ENCODE measurements at regions of chr2 and their contacts with region 1.

Region 1: DNA sequence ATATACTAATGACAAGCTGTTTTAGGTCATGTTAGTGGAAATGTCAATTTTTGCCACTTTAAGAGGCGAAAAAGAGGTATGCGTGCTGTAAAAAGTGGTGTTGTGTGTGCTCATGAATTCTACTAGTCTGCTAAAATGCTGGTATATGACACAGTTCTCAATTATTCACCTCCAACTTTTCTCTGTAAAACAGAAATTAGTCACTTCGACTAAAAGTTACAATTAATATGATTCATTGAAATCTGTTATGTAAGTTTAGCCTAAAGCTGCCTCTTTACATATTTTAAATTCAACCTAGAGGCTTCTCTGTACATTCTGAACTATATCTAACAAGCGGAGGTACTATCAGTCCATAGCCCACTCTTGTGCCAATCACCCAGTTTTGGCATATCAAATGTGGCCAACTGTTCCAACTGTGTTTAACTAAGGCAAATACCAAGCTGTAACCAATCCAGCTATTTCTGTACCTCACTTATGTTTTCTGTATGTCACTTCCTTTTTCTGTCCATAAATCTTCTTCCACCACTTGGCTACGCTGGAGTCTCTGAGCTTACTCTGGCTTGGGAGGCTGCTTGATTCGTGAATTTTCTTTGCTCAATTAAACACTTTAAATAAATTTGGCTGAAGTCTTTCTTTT is 20.8 kb downstream of the BAZ2B start:
- DNase-seq: peak in 1 of 4 experiments; percentile 30
- ATAC-seq: peak; percentile 63
- H3K4me3 ChIP-seq: no peak overlapping the region
- H3K27ac ChIP-seq: peak overlapping the region; percentile 9; the same call in 1 of the 3 replicates
- H3K4me1 ChIP-seq: no peaks in the 10 kb centered on the region; a peak in 1 of 5 replicates
- H3K27me3 ChIP-seq: no peaks in the 10 kb centered on the region
- CTCF ChIP-seq: peak in 1 of 3 experiments; percentile 43; a peak in 2 of 6 replicates
- EP300 ChIP-seq: no peak
- POLR2A ChIP-seq: no peak
- RAD21 ChIP-seq: peak in 1 of 2 experiments; percentile 40; a peak in 3 of 4 replicates

Region 2: GRCh38 chr2:158936978-158937377 is 658.5 kb before region 1 on chr2:
- CTCF ChIA-PET with region 1: no interaction called
- POLR2A ChIA-PET with region 1: no interaction called
- in situ Hi-C with region 1: no loop called
- intact Hi-C with region 1: no loop called
- DNase-seq: no peak
- ATAC-seq: no peak
- H3K4me3 ChIP-seq: no peak overlapping the region
- H3K27ac ChIP-seq: no peak overlapping the region
- H3K4me1 ChIP-seq: no peaks in the 10 kb centered on the region
- H3K27me3 ChIP-seq: peaks cover 0 to 20% of the 10 kb centered on the region in 2 experiments; a peak in 4 of 5 replicates
- CTCF ChIP-seq: no peak
- EP300 ChIP-seq: no peak
- POLR2A ChIP-seq: no peak
- RAD21 ChIP-seq: no peak

Region 3: GRCh38 chr2:159573846-159574606 is 21.5 kb before region 1 on chr2:
- CTCF ChIA-PET with region 1: no interaction called
- POLR2A ChIA-PET with region 1: no interaction called
- in situ Hi-C with region 1: no loop called
- intact Hi-C with region 1: no loop called
- DNase-seq: no peak
- ATAC-seq: no peak
- H3K4me3 ChIP-seq: no peak overlapping the region
- H3K27ac ChIP-seq: no peak overlapping the region
- H3K4me1 ChIP-seq: no peaks in the 10 kb centered on the region
- H3K27me3 ChIP-seq: no peaks in the 10 kb centered on the region
- CTCF ChIP-seq: no peak
- EP300 ChIP-seq: no peak
- POLR2A ChIP-seq: no peak
- RAD21 ChIP-seq: no peak

Region 4: GRCh38 chr2:159609811-159610432 is 14.4 kb after region 1 on chr2:
- CTCF ChIA-PET with region 1: no interaction called
- POLR2A ChIA-PET with region 1: interaction called, 13 read pairs
- in situ Hi-C with region 1: no loop called
- intact Hi-C with region 1: no loop called
- DNase-seq: no peak
- ATAC-seq: no peak
- H3K4me3 ChIP-seq: no peak overlapping the region
- H3K27ac ChIP-seq: no peak overlapping the region
- H3K4me1 ChIP-seq: peaks cover 0 to 14% of the 10 kb centered on the region in 2 experiments; a peak in 3 of 5 replicates
- H3K27me3 ChIP-seq: no peaks in the 10 kb centered on the region
- CTCF ChIP-seq: no peak
- EP300 ChIP-seq: no peak
- POLR2A ChIP-seq: no peak
- RAD21 ChIP-seq: no peak